RWPE1 (cell line): ENCODE measurements at regions of chr6 and their contacts with region 1.

Region 1: GRCh38 chr6:73325656-73326055 is 28.4 kb downstream of the DPPA5 start:
- DNase-seq: no peak
- H3K27ac ChIP-seq: no peak overlapping the region
- CTCF ChIP-seq: no peak

Region 2: GRCh38 chr6:73285674-73286283 is 39.9 kb before region 1 on chr6:
- CTCF ChIA-PET with region 1: interaction called, 17 read pairs
- POLR2A ChIA-PET with region 1: no interaction called
- DNase-seq: peak; percentile 48
- H3K27ac ChIP-seq: no peak overlapping the region
- CTCF ChIP-seq: 0 out of 2 replicates have a peak, but pooled peaks have one; percentile 22